ENCODE measurements at regions of chr18 and their contacts with region 1.

Region 1: DNA sequence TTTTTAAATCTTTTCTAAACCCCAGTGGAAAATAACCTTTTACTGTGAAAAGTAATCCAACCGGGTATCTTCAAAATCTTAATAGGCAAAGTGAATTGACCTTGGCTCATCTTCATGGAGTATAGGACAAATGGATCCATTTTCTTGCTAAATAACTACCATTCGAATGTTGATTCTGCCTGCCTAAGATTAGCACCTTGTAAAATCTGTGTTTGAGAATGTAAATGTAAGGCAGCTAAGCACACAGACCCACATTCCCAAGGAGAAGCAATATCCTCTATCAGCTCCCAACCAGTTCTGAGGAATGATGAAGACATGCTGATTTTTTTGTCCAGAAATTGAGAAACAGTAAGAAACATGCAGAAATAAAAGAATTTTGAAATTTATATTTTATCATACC is 509.8 kb upstream of the SMIM21 start:
- DNase-seq: no peak
- ATAC-seq: no peak
- H3K4me3 ChIP-seq: no peak overlapping the region
- H3K27ac ChIP-seq: no peak overlapping the region
- H3K4me1 ChIP-seq: no peaks in the 10 kb centered on the region
- H3K27me3 ChIP-seq: no peaks in the 10 kb centered on the region
- CTCF ChIP-seq: no peak
- POLR2A ChIP-seq: no peak
- RAD21 ChIP-seq: no peak

Region 2: GRCh38 chr18:75962036-75962572 is 24.8 kb after region 1 on chr18:
- CTCF ChIA-PET with region 1: no interaction called
- POLR2A ChIA-PET with region 1: no interaction called
- RAD21 ChIA-PET with region 1: no interaction called
- intact Hi-C with region 1: loop called (anchors 2 kb)
- DNase-seq: no peak
- ATAC-seq: no peak
- H3K4me3 ChIP-seq: no peak overlapping the region
- H3K27ac ChIP-seq: no peak overlapping the region
- H3K4me1 ChIP-seq: no peaks in the 10 kb centered on the region
- H3K27me3 ChIP-seq: no peaks in the 10 kb centered on the region
- CTCF ChIP-seq: no peak
- POLR2A ChIP-seq: no peak
- RAD21 ChIP-seq: no peak